ENCODE measurements at regions of chr18 and their contacts with region 1.

Region 1: GRCh38 chr18:36411745-36412168 is 114.2 kb downstream of the FHOD3 start:
- DNase-seq: no peak
- ATAC-seq: no peak

Region 2: GRCh38 chr18:36376361-36376760 is 35.4 kb before region 1 on chr18:
- intact Hi-C with region 1: loop called (anchors 5 kb)
- DNase-seq: no peak
- ATAC-seq: no peak

Region 3: DNA sequence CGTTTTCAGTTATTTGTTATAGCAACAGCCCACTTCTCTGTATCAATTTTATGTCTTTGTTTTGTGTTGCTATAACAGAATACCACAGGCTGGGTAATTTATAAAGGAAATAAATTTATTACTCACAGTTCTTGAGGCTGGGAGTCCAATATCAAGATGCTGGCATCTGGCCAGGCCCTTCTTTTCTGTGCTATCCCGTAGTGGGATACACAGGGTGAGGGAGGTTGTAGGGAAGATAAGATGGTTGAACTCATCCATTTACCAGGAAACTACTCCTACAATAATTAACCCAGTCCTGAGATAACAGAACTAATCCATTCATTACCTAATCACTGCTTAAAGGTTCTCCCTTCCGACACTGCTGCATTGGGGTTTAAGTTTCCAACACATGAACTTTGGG is 196.3 kb after region 1 on chr18:
- intact Hi-C with region 1: no loop called
- DNase-seq: no peak
- ATAC-seq: no peak